Common myeloid progenitor, CD34-positive (primary cell): ENCODE measurements at regions of chr16 and their contacts with region 1.

Region 1: GRCh38 chr16:88925101-88925887 is 51.7 kb downstream of the CBFA2T3 start:
- DNase-seq: peak; percentile 62 to 87 (median 84)
- H3K4me3 ChIP-seq: no peak overlapping the region
- H3K27ac ChIP-seq: no peak overlapping the region
- H3K4me1 ChIP-seq: peaks cover 0 to 68% (median 64%) of the 10 kb centered on the region in 4 experiments
- H3K27me3 ChIP-seq: no peaks in the 10 kb centered on the region

Region 2: DNA sequence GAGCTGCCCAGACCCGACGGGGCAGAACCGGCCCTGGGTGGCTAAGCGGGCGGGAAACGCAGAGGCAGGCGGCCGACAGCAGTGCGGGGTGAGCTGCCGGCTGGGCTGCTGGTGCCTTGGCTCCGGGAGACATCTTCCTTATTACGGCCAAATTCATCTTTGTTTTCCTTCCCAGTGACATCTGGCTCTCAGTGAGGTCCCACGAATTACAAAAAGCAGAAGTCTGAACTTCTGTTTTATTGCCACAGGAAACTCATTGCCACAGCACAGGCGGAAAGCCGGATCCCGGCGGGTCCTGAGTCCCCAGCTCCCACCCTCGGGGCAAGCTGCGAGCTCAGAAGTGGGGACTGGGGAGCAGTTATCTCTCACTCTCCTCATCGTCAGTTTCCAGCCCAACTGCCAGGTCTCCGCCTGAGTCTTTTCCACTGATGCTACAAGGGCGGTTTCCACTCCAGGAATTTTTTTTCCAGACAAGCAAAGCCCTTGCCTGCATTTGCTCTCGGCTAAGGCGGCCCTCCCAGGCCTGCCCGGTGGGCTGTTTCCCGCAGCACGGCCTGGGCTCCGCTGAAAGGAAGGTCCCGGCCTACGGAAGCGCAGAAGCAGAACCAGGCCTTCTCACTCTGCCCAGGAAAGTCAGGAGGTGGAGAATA is 11.4 kb after region 1 on chr16:
- CTCF ChIA-PET with region 1: interaction called, 39 read pairs
- POLR2A ChIA-PET with region 1: interaction called, 5 read pairs
- DNase-seq: peak; percentile 88 to 96 (median 95)
- H3K4me3 ChIP-seq: peak overlapping the region; percentile 17 to 82 (median 56)
- H3K27ac ChIP-seq: peak overlapping the region; percentile 58 to 75
- H3K4me1 ChIP-seq: peaks cover 3 to 68% (median 56%) of the 10 kb centered on the region in 4 experiments
- H3K27me3 ChIP-seq: no peaks in the 10 kb centered on the region